ENCODE measurements at regions of chr14 and their contacts with region 1.

Region 1: GRCh38 chr14:101843665-101844064 is 82.2 kb downstream of the PPP2R5C start:
- DNase-seq: peak; percentile 80
- H3K4me3 Mint-ChIP-seq: no peak overlapping the region
- H3K27ac Mint-ChIP-seq: peak overlapping the region; percentile 74
- H3K4me1 Mint-ChIP-seq: peaks cover 88% of the 10 kb centered on the region
- H3K27me3 Mint-ChIP-seq: no peaks in the 10 kb centered on the region

Region 2: GRCh38 chr14:101167428-101167827 is 676.2 kb before region 1 on chr14:
- CTCF ChIA-PET with region 1: no interaction called
- intact Hi-C with region 1: no loop called
- DNase-seq: no peak
- H3K4me3 Mint-ChIP-seq: no peak overlapping the region
- H3K27ac Mint-ChIP-seq: no peak overlapping the region
- H3K4me1 Mint-ChIP-seq: no peaks in the 10 kb centered on the region
- H3K27me3 Mint-ChIP-seq: no peaks in the 10 kb centered on the region

Region 3: DNA sequence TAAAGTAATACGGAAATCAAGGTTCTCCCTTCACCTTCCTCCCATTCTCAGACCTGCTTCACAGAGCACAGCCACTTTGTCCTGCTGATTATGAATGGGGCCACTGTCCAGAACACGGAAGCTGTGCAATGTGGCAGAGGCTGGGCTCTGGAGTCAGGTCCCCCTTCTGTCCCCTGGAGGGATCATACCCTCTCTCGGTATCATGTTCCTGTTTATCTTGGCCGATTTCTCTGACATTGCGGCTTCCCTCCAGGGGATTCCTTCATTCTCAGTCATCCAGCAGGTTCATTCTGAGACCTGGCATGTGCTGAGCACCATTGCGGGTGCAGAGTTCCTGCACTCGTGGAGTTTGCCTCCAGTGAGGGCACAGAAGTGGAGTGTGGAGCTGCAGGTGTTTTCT is 70.8 kb before region 1 on chr14:
- CTCF ChIA-PET with region 1: interaction called, 50 read pairs
- intact Hi-C with region 1: loop called (anchors 2 kb)
- DNase-seq: no peak
- H3K4me3 Mint-ChIP-seq: no peak overlapping the region
- H3K27ac Mint-ChIP-seq: no peak overlapping the region
- H3K4me1 Mint-ChIP-seq: peaks cover 13% of the 10 kb centered on the region
- H3K27me3 Mint-ChIP-seq: no peaks in the 10 kb centered on the region

Region 4: DNA sequence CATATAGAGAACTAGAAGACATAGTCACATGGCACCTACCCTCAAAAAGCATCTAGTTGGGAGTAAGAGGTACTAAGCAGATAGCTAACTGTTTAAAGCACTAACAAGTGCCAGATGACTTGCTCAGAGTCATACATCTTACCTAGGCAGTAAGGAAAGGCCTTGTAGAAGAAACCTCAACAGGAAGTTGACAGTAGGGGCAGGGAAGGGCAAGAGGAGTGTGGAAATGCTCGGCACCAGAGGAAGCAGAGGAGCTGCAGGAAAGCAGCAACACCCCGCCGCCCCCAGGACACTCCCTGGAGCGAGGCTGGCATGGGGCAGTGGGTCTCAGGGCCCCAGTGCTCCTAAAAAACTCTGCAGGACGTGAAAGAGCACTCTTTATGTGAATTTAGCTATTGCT is 10.7 kb after region 1 on chr14:
- CTCF ChIA-PET with region 1: interaction called, 4 read pairs
- intact Hi-C with region 1: loop called (anchors 1 kb)
- DNase-seq: peak; percentile 53
- H3K4me3 Mint-ChIP-seq: no peak overlapping the region
- H3K27ac Mint-ChIP-seq: peak overlapping the region; percentile 38
- H3K4me1 Mint-ChIP-seq: peaks cover 81% of the 10 kb centered on the region
- H3K27me3 Mint-ChIP-seq: no peaks in the 10 kb centered on the region

Region 5: DNA sequence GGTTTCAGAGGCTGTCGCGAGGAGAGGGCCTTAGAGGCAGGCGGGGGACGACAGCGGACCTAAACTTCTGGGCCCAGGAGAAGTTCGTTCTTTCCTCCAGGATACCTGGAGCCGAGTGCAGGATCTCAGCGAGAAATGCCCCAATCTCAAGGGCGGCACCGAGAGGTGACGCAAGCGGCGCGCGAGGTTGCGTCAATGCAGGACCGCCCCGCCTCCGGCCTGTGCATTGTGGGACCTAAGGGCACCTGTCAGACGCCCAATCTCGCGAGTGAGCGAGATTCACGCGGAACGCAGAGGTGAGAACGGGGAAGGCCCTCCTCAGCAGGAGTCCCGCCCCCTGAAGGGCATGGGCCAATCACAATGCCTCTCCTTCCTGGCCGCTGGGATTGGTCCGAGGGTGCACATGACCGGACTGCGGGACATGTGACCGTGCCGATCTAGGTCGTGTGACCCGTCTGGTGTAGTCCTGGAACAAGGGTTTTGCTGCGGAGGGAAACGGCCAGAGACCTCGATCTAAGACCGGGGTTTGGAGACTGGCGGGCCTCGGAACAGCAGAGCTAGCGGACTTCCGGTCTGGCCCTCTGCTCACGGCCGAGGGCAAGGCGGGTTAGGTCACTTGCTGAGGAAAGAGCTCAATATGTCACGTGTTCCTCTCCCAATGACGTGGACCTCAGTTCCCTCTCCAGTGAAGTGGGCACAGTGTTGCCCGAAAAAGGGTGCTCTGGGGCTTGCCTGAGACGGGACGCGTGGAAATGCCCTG is 104.4 kb after region 1 on chr14:
- CTCF ChIA-PET with region 1: interaction called, 3 read pairs
- intact Hi-C with region 1: loop called (anchors 1 kb)
- DNase-seq: peak; percentile 100
- H3K4me3 Mint-ChIP-seq: peak overlapping the region; percentile 98
- H3K27ac Mint-ChIP-seq: peak overlapping the region; percentile 97
- H3K4me1 Mint-ChIP-seq: peaks cover 18% of the 10 kb centered on the region
- H3K27me3 Mint-ChIP-seq: peaks cover 20% of the 10 kb centered on the region